Ascending aorta (tissue), 2 donors: ENCODE measurements at regions of chr10 and their contacts with region 1.

Region 1: DNA sequence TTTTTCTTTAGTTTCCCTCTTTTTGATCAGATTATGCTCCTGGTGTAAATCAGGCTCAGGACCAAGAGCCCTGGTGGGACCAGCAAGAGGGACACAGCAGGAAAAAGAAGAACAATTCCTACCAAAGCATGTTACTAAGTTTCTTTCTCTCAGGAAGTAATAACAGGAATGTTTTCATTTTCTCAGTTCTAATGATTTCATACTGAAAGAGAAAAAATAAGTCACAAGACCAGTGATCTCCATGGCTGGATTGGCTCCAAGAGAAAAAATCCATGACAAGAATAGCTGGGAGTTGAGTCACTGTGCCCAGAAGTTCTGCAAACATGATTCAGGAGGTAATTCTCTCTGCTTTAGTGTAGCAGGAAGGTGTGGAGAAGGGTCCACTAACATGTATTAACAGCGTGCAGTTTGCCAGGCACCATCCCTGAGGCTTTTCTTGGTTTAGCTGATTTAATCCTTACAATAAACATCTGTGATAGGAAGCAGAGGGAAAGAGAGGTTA is 23.8 kb upstream of the IFIT2 start:
- DNase-seq: peak in 1 of 2 donors; percentile 88
- H3K4me3 ChIP-seq: no peak overlapping the region
- H3K27ac ChIP-seq: peak overlapping the region; percentile 82 to 89
- H3K4me1 ChIP-seq: peaks cover 2 to 40% of the 10 kb centered on the region in 2 donors
- H3K27me3 ChIP-seq: no peaks in the 10 kb centered on the region
- CTCF ChIP-seq: no peak

Region 2: DNA sequence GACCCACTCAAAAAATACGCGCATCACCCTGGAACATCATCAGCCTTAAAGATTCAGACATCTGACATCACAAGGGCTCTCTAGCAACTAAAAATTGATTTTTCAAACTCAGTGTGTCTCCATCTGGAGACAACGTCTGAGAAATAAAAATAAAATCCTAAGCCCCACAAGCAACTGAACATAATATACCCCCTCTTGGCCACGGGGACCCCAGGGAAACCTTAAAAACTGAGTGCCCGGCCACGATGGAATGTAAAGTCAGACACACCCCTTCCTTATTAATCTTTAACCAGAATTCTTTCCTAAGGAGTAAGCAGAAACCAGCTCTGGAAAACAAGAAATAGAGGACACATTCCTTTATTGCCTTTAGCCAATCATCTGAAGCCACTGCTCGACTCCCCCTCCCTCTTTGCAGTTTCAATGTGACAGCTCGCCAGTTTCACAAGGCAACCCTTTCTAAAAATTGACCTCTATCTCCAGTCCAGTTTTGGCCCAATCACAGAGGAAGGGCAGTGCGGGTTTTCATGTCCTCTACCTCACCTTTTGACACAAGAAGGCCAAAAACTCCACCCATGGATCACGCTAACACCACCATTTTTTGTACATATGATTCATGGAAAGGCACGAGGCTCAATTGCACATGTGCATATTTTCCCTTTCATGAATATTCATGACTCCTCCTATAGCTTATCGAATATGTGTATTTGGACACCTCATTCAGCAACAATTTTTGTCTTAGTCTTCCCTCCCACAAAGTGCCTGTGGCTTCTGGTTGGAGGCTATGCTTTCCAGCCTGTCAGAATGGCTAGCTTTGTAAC is 73.9 kb after region 1 on chr10:
- intact Hi-C with region 1: loop called (anchors 5 kb)
- DNase-seq: peak in 1 of 2 donors; percentile 83
- H3K4me3 ChIP-seq: peak overlapping the region in 1 of 2 donors; percentile 27
- H3K27ac ChIP-seq: peak overlapping the region; percentile 85 to 89
- H3K4me1 ChIP-seq: peaks cover 0 to 35% of the 10 kb centered on the region in 2 donors
- H3K27me3 ChIP-seq: no peaks in the 10 kb centered on the region
- CTCF ChIP-seq: no peak

Region 3: DNA sequence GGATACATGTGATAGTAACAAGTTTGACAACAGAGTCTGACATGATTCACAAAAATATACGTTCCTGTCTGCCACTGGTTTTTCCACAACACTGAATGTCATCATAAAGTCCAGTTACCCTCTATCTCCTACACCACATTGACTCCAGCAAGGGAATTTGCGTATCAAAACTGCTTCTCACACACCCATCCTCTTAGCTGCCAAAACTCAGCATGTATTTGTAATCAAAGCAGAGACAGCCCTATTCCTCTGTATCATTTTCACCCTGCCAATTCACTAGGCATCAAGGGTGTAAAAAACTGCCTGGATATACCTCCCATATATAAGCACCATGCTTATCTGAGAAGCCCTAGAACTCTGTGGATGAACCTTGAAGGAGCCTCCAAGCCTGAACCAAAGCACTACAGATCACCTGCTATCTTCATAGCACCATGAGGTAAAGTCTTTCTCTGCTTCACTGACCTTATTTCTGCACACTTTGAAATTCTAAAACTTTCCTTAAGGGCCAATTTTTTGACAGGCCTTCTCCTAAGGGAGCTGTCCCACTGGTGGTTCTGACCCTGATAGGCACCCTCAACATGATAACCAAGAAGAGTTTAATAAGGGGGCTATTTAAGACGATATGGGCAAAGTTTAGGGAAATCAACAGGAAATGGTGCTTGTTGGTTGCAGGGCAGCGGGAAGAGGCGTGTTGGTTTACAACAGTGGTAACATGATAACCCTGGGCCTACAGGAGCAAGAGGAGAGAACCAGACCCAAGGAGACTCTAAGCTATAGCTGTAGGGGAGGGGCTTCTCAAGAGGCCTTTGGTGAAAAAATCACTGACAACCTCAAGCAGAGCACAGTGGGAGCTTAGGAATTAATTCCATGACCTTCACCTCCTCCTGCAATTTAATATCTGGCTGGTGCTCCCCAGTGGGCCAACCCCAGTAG is 99.9 kb after region 1 on chr10 and contains the start of gene IFIT1B:
- intact Hi-C with region 1: loop called (anchors 2 kb)
- DNase-seq: no peak
- H3K4me3 ChIP-seq: no peak within 1 kb of the TSS
- H3K27ac ChIP-seq: no peak within 1 kb of the TSS
- H3K4me1 ChIP-seq: peaks cover 10 to 17% of the 10 kb centered on the region in 2 donors
- H3K27me3 ChIP-seq: no peaks in the 10 kb centered on the region
- CTCF ChIP-seq: no peak
- total RNA-seq, gene IFIT1B: not detected

Region 4: DNA sequence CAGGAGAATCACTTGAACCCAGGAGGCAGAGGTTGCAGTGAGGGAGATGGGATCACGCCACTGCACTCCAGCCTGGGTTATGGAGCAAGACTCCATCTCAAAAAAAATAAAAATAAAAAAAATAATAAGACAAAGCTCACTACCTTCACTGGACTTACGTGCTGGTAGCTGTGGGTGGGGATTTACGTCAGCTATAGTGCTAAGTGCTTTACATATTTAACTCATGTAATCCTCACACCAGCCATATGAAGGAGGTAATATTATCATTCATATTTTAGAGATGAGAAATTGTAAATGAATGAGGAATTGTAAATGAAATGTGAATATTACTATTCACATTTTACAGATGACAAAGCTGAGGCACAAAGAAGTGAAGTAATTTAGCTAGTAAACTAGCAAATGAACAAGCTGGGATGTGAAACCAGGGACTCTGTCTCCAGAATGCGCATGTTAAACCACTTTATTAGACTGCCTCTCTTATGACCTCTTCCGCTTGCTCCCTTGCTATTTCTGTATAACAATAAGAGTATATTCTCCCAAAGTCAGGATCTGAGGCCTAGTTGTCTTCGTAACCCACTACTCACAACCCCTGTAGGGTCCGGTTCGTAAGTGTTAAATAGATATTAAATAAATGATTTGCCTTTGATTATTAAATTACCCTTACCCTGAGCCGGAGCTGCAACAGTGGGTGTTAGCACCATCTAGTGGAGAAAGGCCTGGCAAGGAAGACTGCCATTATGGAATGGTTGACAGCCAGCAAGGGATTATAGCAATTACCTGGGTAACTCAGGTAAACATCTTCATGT is 1509.5 kb after region 1 on chr10:
- intact Hi-C with region 1: no loop called
- DNase-seq: no peak
- H3K4me3 ChIP-seq: no peak overlapping the region
- H3K27ac ChIP-seq: no peak overlapping the region
- H3K4me1 ChIP-seq: no peaks in the 10 kb centered on the region
- H3K27me3 ChIP-seq: no peaks in the 10 kb centered on the region
- CTCF ChIP-seq: peak; percentile 24 to 82 (median 61)